Kidney (tissue), 22 donors: ENCODE measurements at regions of chr11 and their contacts with region 1.

Region 1: DNA sequence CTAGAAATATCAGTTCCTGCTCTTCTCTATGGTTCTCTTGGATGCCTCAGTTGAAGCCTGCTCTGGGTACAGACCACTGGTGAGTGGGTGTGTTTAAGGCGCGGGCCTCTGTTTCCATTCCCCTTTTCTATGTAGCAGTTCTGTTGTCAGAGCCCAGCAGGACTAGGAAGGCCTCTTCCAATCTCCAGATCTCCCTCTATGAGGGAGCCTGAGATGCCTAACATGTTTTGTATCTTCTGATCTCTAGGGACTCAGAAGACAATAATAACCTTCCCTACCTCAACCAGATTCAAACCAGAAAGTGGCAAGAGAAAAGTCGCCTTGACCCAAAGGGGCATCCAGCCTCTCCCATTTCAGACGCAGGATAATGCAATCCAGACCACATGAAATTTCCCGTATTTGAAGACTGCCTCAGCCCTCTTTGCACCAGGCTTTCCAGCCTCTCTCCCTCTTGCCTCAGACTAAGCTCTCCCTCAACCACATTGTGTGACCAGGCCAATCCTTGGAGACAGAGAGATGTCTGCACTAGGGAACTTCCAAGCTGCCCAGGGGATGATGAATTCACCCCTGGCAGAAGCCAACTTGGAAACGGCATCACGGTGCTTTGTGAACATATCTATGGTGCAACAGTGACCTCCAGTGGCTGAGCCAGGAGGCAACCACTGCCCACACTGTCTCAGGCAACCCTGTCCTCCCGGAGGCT is 150.1 kb upstream of the UBASH3B start:
- DNase-seq: peak; percentile 83 to 89 (median 85)
- H3K4me3 ChIP-seq: no peak overlapping the region
- H3K27ac ChIP-seq: no peak overlapping the region
- H3K4me1 ChIP-seq: no peaks in the 10 kb centered on the region
- H3K27me3 ChIP-seq: no peaks in the 10 kb centered on the region
- CTCF ChIP-seq: peak; percentile 93

Region 2: GRCh38 chr11:122215244-122215992 is 290.0 kb before region 1 on chr11:
- intact Hi-C with region 1: loop called (anchors 10 kb)
- DNase-seq: peak; percentile 73 to 91 (median 77)
- H3K4me3 ChIP-seq: no peak overlapping the region
- H3K27ac ChIP-seq: no peak overlapping the region
- H3K4me1 ChIP-seq: peaks cover 0 to 1% (median 0%) of the 10 kb centered on the region in 3 donors
- H3K27me3 ChIP-seq: no peaks in the 10 kb centered on the region
- CTCF ChIP-seq: peak; percentile 89

Region 3: DNA sequence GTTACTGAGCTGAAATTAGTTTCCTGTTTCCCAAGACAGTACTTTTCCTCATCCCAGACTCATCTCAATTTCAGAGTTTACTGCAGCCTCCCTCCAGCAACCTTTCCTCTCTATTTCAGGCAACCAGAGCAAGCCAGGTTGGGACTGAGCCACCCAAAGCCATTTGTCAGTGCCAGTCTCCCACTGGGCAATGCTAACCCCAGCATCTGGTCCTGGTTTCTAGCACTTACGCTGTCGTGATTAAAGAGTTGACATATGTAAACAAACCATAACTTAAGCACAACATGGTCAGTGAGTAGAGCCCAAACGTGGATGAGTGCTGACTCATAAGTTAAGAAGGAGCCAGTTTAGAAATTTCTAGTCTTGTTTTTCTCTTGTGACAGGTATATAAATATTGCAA is 269.8 kb before region 1 on chr11:
- intact Hi-C with region 1: no loop called
- DNase-seq: peak in 3 of 5 donors; percentile 12 to 37 (median 19)
- H3K4me3 ChIP-seq: no peak overlapping the region
- H3K27ac ChIP-seq: no peak overlapping the region
- H3K4me1 ChIP-seq: no peaks in the 10 kb centered on the region
- H3K27me3 ChIP-seq: no peaks in the 10 kb centered on the region
- CTCF ChIP-seq: no peak